PC-3 (cell line): ENCODE measurements at regions of chrX and their contacts with region 1.

Region 1: DNA sequence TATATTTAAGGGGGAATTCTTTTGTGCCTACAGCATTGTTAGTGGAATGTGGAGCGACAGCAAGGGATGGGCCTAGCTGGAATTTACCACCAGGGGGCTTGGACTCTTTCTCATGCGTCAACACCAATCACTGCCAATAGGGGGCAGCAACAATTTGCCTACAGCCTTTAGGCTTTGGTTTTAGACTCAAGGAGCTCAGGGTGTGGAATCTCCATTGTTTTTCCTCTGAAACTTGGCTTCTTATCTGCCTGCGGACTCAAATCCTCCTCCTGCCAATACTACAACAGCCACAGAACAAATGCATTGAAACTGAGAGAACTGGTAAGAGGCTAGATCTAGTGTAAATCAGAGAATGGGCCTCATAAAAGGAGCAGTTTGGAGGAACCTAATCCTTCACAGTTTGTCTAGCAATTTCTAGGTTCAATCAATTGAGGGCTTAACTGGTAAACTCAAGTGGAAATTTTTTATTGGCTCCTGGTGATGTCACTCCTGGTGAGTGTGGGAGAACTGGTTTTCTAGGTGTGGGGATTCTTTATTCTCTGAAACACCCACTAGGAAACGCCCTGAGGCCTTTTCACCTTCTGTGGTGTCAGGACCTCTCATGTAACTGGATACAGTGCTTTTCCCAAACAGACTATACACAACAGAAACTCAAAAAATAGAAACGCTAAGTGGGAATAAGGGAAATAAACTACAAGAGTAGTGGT is 27.9 kb upstream of the TMSB4X start:
- DNase-seq: peak; percentile 93
- ATAC-seq: peak; percentile 86
- H3K4me3 ChIP-seq: peak overlapping the region; percentile 41
- H3K27ac ChIP-seq: peak overlapping the region; percentile 93
- H3K4me1 ChIP-seq: peaks cover 25% of the 10 kb centered on the region
- H3K27me3 ChIP-seq: no peaks in the 10 kb centered on the region
- CTCF ChIP-seq: peak; percentile 99

Region 2: GRCh38 chrX:12894074-12895030 is 52.6 kb before region 1 on chrX:
- CTCF ChIA-PET with region 1: no interaction called
- POLR2A ChIA-PET with region 1: no interaction called
- intact Hi-C with region 1: no loop called
- DNase-seq: peak; percentile 55
- ATAC-seq: peak; percentile 58
- H3K4me3 ChIP-seq: no peak overlapping the region
- H3K27ac ChIP-seq: no peak overlapping the region
- H3K4me1 ChIP-seq: no peaks in the 10 kb centered on the region
- H3K27me3 ChIP-seq: no peaks in the 10 kb centered on the region
- CTCF ChIP-seq: peak; percentile 84

Region 3: DNA sequence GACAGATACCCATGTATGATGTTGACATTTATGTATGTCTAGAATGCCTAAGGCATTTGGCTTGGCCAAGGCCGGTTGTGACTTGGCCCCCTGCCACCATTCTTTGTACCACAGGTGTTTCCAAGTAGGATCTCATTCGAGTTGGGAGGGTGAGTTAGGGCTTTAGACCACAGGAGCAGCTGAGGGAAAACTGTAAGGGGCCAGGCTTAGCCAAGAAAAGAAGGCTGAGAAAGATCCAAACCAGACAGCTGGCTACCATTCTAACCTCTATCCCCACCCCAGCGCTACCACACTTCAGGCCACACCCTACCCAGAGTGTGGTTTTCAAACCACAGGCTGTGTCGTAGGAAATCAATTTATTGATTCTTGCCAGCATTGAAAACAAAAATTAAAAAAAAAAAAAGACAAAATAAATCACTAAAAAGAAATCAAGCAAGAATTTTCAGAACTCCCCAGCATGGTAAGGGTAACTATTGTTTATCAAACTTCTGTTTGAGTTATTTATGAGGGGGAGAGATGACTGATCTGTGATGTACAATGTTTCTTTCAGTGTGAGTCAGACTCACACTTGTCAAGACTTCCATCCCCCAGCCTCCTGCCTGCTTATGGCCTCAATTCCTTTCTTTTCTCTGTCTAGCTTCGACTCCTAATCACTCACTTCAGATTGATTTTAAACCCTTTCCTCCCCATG is 37.8 kb after region 1 on chrX:
- CTCF ChIA-PET with region 1: no interaction called
- POLR2A ChIA-PET with region 1: no interaction called
- intact Hi-C with region 1: loop called (anchors 5 kb)
- DNase-seq: peak; percentile 95
- ATAC-seq: peak; percentile 56
- H3K4me3 ChIP-seq: peak overlapping the region; percentile 34; the same call in 1 of the 2 replicates
- H3K27ac ChIP-seq: peak overlapping the region; percentile 97
- H3K4me1 ChIP-seq: peaks cover 45% of the 10 kb centered on the region
- H3K27me3 ChIP-seq: no peaks in the 10 kb centered on the region
- CTCF ChIP-seq: no peak